Sciatic nerve (tissue), 2 donors: ENCODE measurements at regions of chr6 and their contacts with region 1.

Region 1: DNA sequence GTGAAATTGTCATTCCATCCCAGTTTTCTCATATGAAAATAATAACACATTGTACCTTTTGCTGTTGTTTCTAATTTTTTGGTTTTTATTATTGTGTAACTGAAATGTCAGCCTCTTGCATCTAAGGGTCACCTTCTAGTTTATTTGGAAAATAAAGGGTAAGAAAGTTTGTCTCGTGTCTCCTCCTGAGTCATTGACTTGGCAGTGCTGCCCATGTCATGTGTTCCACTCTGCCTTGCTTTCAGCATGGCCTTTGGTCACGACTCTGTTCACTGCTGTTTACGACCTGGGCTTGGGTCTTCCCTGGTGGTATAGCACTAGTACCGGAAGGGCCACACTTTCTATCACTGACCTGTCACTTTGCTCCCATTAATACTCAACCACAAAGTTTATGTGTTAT is 171.4 kb upstream of the RSPO3 start:
- DNase-seq: peak; percentile 76
- ATAC-seq: peak; percentile 88

Region 2: DNA sequence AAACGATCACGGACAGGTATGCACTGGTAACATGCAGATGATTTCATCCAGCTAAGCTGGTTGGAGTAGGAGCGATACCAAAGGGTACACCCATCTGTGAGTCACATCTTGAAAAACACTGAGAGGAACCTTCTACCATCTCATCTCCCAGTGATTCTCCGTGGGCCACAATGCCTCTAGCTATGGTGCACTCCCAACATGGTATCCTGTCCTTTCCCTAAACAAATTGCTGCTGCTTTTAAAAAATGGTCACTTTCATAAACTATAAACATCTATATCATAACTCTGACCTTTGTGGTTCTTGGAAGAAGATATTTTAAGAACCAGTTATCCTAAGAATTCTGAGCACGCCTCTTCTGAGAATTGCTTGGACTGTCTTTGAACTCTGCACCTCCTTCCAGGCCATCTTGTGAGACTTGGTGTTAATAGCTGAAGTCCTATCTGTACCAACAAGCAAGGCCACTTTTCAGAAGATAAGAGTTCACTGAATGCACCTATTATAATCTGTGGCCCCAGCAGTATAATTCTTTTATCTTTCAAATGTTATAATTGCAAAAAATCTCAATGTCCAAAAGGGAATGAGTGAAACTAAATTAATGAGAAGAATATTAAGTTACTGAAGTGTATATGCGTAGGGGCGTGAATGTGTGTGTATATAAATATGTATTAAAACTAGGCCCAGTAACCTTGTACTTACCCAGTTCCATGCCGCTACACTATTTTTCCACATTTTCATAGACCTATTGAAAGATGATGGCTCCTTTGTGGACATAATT is 1864.0 kb before region 1 on chr6:
- intact Hi-C with region 1: no loop called
- DNase-seq: no peak
- ATAC-seq: no peak

Region 3: GRCh38 chr6:126824226-126824625 is 122.8 kb before region 1 on chr6:
- intact Hi-C with region 1: loop called (anchors 10 kb)
- DNase-seq: no peak
- ATAC-seq: no peak